Naive thymus-derived CD4-positive, alpha-beta T cell (primary cell): ENCODE measurements at regions of chr19 and their contacts with region 1.

Region 1: GRCh38 chr19:1605236-1606137 is at the start of gene UQCR11:
- DNase-seq: peak; percentile 76 to 94 (median 91)
- ATAC-seq: peak; percentile 89
- H3K4me3 ChIP-seq: peak within 1 kb of the TSS; percentile 79
- H3K4me3 Mint-ChIP-seq: peak within 1 kb of the TSS; percentile 92 to 99 (median 96)
- H3K27ac ChIP-seq: peak within 1 kb of the TSS; percentile 97
- H3K27ac Mint-ChIP-seq: peak within 1 kb of the TSS; percentile 92 to 100 (median 98)
- H3K4me1 ChIP-seq: peaks cover 28 to 40% of the 10 kb centered on the region in 2 donors
- H3K4me1 Mint-ChIP-seq: peaks cover 20 to 63% (median 44%) of the 10 kb centered on the region in 7 donors
- H3K27me3 ChIP-seq: no peaks in the 10 kb centered on the region
- H3K27me3 Mint-ChIP-seq: no peaks in the 10 kb centered on the region
- total RNA-seq, gene UQCR11: 94.3 to 170 (median 123) TPM

Region 2: GRCh38 chr19:1438035-1438932 is 167.2 kb before region 1 on chr19 and contains the start of gene RPS15:
- CTCF ChIA-PET with region 1: no interaction called
- POLR2A ChIA-PET with region 1: interaction called, 3 read pairs
- intact Hi-C with region 1: loop called in 1 of 2 experiments (anchors 1 kb)
- DNase-seq: peak; percentile 92 to 98 (median 96)
- ATAC-seq: peak; percentile 97
- H3K4me3 ChIP-seq: peak within 1 kb of the TSS; percentile 82
- H3K4me3 Mint-ChIP-seq: peak within 1 kb of the TSS; percentile 87 to 99 (median 98)
- H3K27ac ChIP-seq: peak within 1 kb of the TSS; percentile 92
- H3K27ac Mint-ChIP-seq: peak within 1 kb of the TSS; percentile 96 to 100 (median 99)
- H3K4me1 ChIP-seq: peaks cover 8 to 11% of the 10 kb centered on the region in 2 donors
- H3K4me1 Mint-ChIP-seq: peaks cover 9 to 34% (median 15%) of the 10 kb centered on the region in 7 donors
- H3K27me3 ChIP-seq: no peaks in the 10 kb centered on the region
- H3K27me3 Mint-ChIP-seq: no peaks in the 10 kb centered on the region
- total RNA-seq, gene RPS15: 1,300 to 2,097 (median 2,012) TPM

Region 3: DNA sequence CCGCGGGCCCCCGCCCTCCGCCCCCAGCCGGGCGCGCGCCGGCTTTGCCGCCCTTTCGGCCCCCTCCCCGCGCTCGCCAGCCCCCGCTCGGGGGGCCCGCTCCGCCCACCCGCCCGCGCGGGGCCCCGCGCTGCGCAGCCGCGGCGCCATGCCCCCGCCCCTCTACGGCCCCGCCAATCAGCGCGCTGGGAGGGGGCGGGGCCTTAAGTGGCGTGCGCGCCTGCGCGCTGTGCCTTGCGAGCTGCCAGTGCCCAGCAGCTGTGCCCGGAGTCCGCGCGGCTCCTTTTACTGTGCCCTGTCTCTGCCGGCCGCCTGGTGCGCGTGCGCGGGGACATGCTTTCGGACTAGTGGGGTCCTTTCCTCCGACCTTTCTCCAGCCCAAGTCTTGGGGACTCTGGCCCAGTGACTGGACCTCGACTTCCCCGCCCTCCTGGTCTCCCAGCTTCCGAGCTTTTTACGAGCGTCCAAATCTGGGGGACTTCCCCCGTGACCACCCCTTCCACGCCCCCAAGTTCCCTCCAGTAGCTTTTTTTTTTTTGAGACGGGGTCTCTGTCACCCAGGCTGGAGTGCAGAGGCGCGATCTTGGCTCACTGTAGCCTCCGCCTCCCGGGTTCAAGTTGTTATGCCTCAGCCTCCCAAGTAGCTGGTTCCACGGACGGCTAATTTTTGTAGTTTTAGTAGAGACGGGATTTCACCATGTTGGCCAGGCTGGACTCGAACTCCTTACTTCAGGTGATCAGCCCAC is 12.6 kb before region 1 on chr19 and contains the start of gene MBD3:
- CTCF ChIA-PET with region 1: interaction called, 3 read pairs
- POLR2A ChIA-PET with region 1: interaction called, 52 read pairs
- intact Hi-C with region 1: loop called (anchors 1 kb)
- DNase-seq: peak; percentile 81 to 92 (median 88)
- ATAC-seq: peak; percentile 92
- H3K4me3 ChIP-seq: peak within 1 kb of the TSS; percentile 86
- H3K4me3 Mint-ChIP-seq: peak within 1 kb of the TSS; percentile 84 to 92 (median 90)
- H3K27ac ChIP-seq: peak within 1 kb of the TSS; percentile 99
- H3K27ac Mint-ChIP-seq: peak within 1 kb of the TSS; percentile 79 to 95 (median 91)
- H3K4me1 ChIP-seq: peaks cover 10 to 16% of the 10 kb centered on the region in 2 donors
- H3K4me1 Mint-ChIP-seq: peaks cover 8 to 22% (median 15%) of the 10 kb centered on the region in 7 donors
- H3K27me3 ChIP-seq: no peaks in the 10 kb centered on the region
- H3K27me3 Mint-ChIP-seq: no peaks in the 10 kb centered on the region
- total RNA-seq, gene MBD3: 50.1 to 87.8 (median 64.6) TPM

Region 4: DNA sequence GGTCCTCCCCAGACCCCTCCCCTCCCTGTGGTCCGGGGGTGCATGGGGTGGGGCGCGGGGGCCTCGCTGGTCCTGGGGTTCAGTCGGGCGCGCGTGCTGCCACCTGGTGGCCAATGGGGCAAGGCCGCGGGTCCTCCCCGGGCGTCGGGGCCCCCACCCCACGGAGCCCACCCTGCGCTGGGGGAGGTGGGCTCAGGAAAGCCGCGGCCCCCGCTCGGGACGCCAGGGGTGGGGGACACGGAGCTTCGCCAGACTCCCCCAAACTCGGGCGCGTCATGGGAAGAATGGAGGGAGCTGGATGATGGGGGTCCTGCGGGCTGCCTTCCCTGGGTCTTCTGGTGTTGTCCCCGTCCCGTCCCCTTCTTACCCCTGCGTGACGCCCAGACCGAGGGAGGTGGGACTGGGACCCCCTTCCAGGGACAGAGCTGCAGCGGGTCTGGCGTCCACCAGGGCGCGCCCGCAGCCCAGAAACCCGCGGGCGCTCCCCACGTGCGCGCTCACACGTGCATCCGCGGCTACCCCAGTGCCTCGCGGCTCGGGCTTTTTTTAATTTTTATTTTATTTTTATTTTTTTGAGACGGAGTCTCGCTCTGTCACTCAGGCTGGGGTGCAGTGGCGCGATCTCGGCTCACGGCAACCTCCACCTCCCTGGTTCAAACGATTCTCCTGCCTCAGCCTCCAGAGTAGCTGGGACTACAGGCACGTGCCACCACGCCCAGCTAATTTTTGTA is 66.7 kb after region 1 on chr19:
- CTCF ChIA-PET with region 1: interaction called, 7 read pairs
- POLR2A ChIA-PET with region 1: no interaction called
- intact Hi-C with region 1: loop called (anchors 1 to 5 kb)
- DNase-seq: peak in 8 of 9 donors; percentile 32 to 74 (median 60)
- ATAC-seq: peak; percentile 75
- H3K4me3 ChIP-seq: no peak overlapping the region
- H3K4me3 Mint-ChIP-seq: peak overlapping the region in 2 of 10 donors; percentile 40
- H3K27ac ChIP-seq: no peak overlapping the region
- H3K27ac Mint-ChIP-seq: no peak overlapping the region
- H3K4me1 ChIP-seq: peaks cover 0 to 12% of the 10 kb centered on the region in 2 donors
- H3K4me1 Mint-ChIP-seq: peaks cover 6 to 19% (median 10%) of the 10 kb centered on the region in 7 donors
- H3K27me3 ChIP-seq: peaks cover 2 to 21% of the 10 kb centered on the region in 2 donors
- H3K27me3 Mint-ChIP-seq: peaks cover 38 to 67% (median 45%) of the 10 kb centered on the region in 5 donors

Region 5: GRCh38 chr19:1812469-1813196 is 207.1 kb after region 1 on chr19:
- CTCF ChIA-PET with region 1: no interaction called
- POLR2A ChIA-PET with region 1: no interaction called
- intact Hi-C with region 1: loop called in 1 of 2 experiments (anchors 1 kb)
- DNase-seq: peak; percentile 70 to 88 (median 84)
- ATAC-seq: peak; percentile 85
- H3K4me3 ChIP-seq: peak overlapping the region; percentile 65
- H3K4me3 Mint-ChIP-seq: peak overlapping the region; percentile 93 to 99 (median 96)
- H3K27ac ChIP-seq: peak overlapping the region; percentile 63
- H3K27ac Mint-ChIP-seq: peak overlapping the region; percentile 82 to 97 (median 92)
- H3K4me1 ChIP-seq: peaks cover 0 to 8% of the 10 kb centered on the region in 2 donors
- H3K4me1 Mint-ChIP-seq: peaks cover 9 to 19% (median 11%) of the 10 kb centered on the region in 7 donors
- H3K27me3 ChIP-seq: no peaks in the 10 kb centered on the region
- H3K27me3 Mint-ChIP-seq: no peaks in the 10 kb centered on the region